ENCODE measurements at regions of chr10 and their contacts with region 1.

Region 1: DNA sequence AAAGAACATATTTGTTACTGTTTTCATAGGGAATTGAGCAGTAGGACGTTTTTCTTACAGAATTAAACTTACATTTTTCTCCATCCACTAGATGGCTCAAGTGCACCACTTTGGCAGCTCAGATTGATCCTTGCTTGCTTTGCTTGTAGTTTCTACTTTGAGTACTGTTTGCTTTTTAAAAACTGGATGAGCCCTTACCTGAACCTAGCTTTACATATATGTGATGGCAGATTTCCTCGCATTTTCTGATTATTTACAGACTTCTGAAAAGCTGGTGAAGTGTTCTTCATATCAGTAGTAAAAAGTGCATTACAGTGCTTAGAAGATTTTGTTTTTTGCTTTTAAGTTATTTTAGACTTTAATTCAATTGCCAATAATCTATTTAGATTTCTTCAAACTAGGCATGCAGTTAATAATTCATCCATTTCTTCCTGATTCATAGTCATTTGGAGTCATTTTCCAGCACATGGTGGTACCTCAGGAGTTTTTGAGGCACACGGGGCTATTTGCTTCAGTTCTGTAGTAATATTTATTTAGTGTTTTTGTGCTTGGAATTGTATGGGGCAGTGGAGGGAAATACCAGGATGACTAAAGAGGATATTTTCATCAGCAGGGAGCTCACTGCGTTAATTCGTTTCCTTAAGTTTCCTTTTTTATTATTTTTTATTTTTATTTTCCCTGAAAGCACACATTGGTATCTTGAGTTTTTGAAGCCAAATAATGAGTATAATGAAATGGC is 57.3 kb downstream of the MAPK8 start:
- DNase-seq: peak; percentile 13 to 16
- ATAC-seq: peak in 1 of 2 donors; percentile 58
- H3K4me3 ChIP-seq: no peak overlapping the region
- H3K27ac ChIP-seq: peak overlapping the region in 2 of 4 donors; percentile 1 to 13
- H3K4me1 ChIP-seq: peaks cover 32 to 49% of the 10 kb centered on the region in 2 donors
- H3K27me3 ChIP-seq: no peaks in the 10 kb centered on the region
- CTCF ChIP-seq: peak; percentile 29 to 72 (median 50)
- POLR2A ChIP-seq: no peak

Region 2: DNA sequence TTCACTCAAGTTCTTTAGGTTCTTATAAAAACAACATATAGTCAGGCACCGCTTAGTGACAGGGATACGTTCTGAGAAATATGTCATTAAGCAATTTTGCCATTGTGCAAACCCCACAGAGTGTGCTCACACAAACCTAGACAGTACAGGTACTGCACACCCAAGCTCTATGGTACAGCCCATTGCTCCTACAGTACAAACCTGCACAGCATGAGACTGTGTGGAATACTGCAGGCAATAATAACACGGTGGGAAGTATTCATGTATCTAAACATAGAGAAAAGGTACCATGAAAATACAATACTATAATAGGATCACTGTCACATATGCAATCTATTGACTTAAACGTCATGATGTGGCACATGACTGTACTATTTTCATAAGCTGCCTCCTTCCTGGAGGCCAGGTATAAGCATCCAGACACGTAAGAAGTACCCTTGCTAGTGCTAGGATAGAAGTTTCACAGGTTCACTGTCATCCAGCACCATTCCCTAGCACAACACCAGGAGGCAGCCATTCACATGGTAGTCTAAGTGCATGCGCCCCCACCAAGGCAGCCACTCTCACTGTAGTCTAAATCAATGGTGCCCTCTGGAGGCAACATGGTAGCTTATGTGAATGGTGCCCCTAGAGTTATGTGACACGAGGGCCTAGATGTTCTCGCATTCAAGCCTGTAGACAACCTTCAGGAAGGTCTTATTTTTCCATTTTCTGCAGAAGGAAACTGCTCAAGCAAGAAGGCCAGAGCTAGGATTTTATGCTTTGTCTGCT is 142.5 kb after region 1 on chr10:
- in situ Hi-C with region 1: no loop called
- intact Hi-C with region 1: loop called (anchors 5 kb)
- DNase-seq: no peak
- ATAC-seq: no peak
- H3K4me3 ChIP-seq: no peak overlapping the region
- H3K27ac ChIP-seq: no peak overlapping the region
- H3K4me1 ChIP-seq: no peaks in the 10 kb centered on the region
- H3K27me3 ChIP-seq: no peaks in the 10 kb centered on the region
- CTCF ChIP-seq: peak in 2 of 5 experiments; percentile 13 to 23
- POLR2A ChIP-seq: no peak

Region 3: GRCh38 chr10:48526011-48526821 is 162.4 kb after region 1 on chr10:
- in situ Hi-C with region 1: loop called in 2 of 4 experiments (anchors 25 kb)
- intact Hi-C with region 1: no loop called
- DNase-seq: no peak
- ATAC-seq: no peak
- H3K4me3 ChIP-seq: no peak overlapping the region
- H3K27ac ChIP-seq: no peak overlapping the region
- H3K4me1 ChIP-seq: peaks cover 0 to 6% of the 10 kb centered on the region in 2 donors
- H3K27me3 ChIP-seq: peaks cover 18 to 31% (median 23%) of the 10 kb centered on the region in 3 donors
- CTCF ChIP-seq: no peak
- POLR2A ChIP-seq: no peak

Measured in gastrocnemius medialis (tissue), 4 donors.